Left ventricle myocardium superior (tissue), 1 donor: ENCODE measurements at regions of chr14 and their contacts with region 1.

Region 1: DNA sequence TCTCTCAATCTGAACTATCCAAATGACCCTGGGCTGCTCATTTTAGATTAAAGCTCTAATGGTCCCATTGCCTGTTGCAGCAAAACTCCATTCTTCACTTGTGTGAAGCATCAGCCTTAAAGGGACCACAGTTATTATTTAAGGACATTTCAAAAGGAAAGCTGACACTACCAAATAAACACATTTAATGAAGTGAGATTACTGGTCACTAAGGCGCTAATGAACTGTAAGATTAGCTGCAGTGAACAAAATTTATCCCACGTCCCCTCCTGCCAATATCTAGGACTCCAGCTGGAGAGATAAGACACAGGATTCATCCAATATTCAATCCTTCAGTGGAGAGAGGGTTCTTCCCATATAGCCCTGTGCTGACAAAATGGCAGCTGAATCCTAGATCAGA is 1029.2 kb upstream of the SEL1L start:
- DNase-seq: no peak
- ATAC-seq: no peak

Region 2: DNA sequence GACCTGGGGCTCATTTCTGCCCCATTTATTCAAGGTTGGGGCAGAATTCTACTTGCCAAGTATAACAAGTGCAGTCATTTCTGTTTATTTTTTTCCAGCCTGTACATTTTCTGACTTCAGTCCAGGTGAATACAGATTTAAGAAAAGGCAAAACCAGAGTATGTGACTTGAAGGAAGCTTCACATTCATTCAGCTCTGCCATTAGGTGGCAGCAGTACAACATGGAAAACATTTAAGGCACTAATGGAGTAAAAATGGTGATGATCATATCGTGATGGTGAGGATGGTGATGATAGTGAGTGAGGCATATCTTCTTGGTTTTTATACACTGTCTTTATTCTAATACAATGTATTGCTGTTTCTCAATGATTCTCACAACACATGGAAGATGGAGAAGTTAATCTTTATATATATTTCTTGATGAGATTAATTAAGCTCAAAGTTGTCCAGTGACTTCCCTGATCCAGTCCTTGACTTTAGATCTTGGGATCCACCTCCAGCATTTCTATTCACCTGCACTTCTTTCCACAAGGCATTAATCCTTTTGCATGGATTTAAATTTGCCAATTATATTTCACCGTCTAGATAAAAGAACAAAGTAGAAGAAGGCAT is 852.5 kb before region 1 on chr14:
- intact Hi-C with region 1: loop called (anchors 10 kb)
- DNase-seq: no peak
- ATAC-seq: peak; percentile 44

Region 3: GRCh38 chr14:82449926-82450468 is 112.9 kb before region 1 on chr14:
- intact Hi-C with region 1: no loop called
- DNase-seq: no peak
- ATAC-seq: no peak

Region 4: DNA sequence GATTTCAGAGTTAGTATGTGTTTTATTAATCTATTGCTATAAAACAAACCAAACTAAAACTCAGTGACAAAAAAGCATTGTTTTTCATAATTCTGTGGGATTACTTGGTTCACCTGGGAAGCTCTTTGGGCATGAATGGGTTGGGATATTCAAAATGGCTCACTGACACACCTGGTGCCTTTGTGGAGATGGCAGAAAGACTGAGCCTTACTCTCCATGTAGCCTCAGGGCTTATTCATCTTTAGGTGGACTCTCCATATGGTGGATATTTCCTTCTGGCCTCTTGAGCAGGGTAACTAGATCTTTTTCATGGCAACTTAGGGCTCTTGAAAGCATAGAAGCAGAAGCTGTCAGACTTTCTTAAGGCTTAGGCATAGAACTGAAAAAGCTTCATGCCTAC is 73.5 kb after region 1 on chr14:
- intact Hi-C with region 1: no loop called
- DNase-seq: no peak
- ATAC-seq: no peak